GM10248 (cell line): ENCODE measurements at regions of chr10 and their contacts with region 1.

Region 1: GRCh38 chr10:63166742-63167258 is 33.7 kb downstream of the NRBF2 start:
- DNase-seq: peak; percentile 31
- CTCF ChIP-seq: peak; percentile 60

Region 2: DNA sequence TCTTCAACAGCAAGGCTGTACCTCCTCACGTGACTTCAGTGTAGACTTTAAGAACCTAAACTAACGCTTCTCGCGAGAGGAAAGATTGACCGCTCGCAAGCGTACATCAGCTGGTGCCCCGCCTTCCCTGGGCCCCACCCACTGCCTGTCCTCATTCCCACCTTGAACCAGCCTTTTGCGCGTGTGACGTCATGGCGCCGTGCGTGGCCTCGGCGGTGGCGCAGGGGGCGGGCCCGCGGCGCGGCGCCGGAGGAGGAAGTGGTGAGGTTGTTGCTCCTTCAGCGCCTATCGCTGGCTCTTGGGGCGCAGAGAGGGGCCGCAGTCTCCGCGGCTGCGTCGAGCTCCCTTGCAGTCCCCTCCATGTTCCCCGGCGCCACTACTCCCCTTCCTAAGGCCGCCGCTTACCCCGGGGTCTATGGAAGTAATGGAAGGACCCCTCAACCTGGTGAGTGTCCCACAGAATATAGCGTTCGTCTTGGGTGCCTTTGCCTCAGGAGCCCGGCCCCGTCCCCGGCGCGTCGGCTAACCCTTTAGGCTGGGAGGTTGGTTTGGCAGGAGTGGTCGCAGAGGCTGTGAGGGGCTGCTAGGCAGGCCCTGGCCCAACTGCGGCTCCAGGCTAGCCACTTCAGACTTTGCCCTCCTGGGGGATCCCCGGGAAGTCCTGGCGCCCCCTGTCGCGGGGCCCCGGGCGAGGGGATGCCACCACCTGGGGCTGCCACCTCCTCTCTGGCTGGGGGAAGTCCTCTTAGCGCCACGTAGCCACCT is 33.6 kb before region 1 on chr10 and contains the start of gene NRBF2:
- CTCF ChIA-PET with region 1: interaction called, 12 read pairs
- POLR2A ChIA-PET with region 1: no interaction called
- DNase-seq: peak; percentile 94
- CTCF ChIP-seq: no peak

Region 3: GRCh38 chr10:63145782-63146181 is 21.0 kb before region 1 on chr10:
- CTCF ChIA-PET with region 1: interaction called, 26 read pairs
- POLR2A ChIA-PET with region 1: no interaction called
- DNase-seq: no peak
- CTCF ChIP-seq: no peak

Region 4: DNA sequence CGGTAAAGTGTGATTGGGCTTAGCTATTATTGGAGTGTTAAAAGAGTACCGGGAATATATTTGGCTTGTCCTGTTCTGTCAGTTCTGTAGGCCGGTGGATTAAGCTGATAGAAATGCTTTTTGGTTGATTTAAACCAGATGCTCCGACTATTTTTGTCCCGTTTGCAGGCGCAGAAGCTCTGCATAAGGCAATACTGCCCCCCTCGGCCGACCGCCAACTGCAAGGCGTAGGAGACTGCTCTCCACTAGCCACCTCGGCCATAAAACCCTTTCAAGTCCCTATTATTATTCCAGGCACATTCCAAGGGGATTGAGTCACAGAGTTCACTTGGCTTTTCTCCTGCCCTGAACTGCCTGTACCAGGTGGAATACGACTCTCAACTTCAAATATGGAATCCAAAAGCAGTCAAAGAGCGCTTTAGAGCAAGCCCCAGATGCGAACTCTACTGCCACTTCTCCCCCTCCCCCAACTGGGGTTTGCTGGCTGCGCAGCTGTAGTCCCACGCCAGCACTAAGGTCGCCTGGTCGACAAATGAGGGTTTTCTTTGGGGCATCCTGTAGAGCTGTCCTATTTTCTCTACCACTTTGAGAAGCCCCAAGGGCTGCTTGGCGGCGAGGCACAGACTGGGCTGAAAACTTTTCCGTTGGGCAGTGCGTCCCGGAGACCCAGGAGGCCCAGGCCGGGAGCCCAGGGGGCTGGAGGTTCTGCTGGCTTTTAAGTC is 462.7 kb after region 1 on chr10:
- CTCF ChIA-PET with region 1: interaction called, 103 read pairs
- POLR2A ChIA-PET with region 1: no interaction called
- DNase-seq: peak; percentile 73
- CTCF ChIP-seq: peak; percentile 87

Region 5: DNA sequence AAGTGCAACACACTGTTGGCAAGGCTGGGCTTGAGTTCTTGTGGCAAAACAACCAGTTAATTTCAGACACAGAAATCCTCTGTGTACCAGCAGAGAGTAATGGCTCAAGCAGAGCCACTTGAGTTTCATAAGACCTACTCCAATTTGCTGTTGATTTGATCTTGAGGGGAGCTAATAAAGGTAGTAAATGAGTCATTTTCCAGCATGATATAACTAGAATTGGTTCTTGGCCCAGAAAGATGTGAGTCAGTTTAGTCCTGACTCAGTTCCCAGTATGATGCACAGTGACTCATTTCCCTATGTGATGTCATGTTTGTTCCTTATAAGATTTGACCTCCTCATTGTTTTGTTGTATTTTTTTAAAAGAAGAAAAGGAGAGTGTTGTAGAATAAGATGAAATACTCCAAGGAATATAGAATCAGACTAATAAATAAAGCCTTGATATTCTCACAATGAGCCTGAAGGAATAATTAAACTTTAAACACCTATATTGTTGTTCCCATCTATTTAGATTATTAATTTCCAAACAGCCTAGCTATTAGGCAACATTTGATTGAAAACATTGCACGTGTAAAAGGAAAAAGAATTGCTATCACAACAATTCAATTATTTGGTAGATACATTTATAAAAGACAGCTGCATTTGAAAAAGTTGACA is 540.6 kb after region 1 on chr10:
- CTCF ChIA-PET with region 1: interaction called, 17 read pairs
- POLR2A ChIA-PET with region 1: no interaction called
- DNase-seq: peak; percentile 62
- CTCF ChIP-seq: no peak

Region 6: GRCh38 chr10:63819753-63820329 is 653.0 kb after region 1 on chr10:
- CTCF ChIA-PET with region 1: interaction called, 21 read pairs
- POLR2A ChIA-PET with region 1: no interaction called
- DNase-seq: no peak
- CTCF ChIP-seq: peak; percentile 62